CD4-positive, alpha-beta T cell (primary cell): ENCODE measurements at regions of chr11 and their contacts with region 1.

Region 1: GRCh38 chr11:134506046-134506445 is 94.0 kb upstream of the B3GAT1 start:
- DNase-seq: no peak
- ATAC-seq: no peak
- H3K4me3 ChIP-seq: no peak overlapping the region
- H3K4me3 Mint-ChIP-seq: no peak overlapping the region
- H3K27ac ChIP-seq: no peak overlapping the region
- H3K27ac Mint-ChIP-seq: no peak overlapping the region
- H3K4me1 ChIP-seq: no peaks in the 10 kb centered on the region
- H3K4me1 Mint-ChIP-seq: no peaks in the 10 kb centered on the region
- H3K27me3 ChIP-seq: no peaks in the 10 kb centered on the region
- H3K27me3 Mint-ChIP-seq: peaks cover 19% of the 10 kb centered on the region
- CTCF ChIP-seq: no peak

Region 2: DNA sequence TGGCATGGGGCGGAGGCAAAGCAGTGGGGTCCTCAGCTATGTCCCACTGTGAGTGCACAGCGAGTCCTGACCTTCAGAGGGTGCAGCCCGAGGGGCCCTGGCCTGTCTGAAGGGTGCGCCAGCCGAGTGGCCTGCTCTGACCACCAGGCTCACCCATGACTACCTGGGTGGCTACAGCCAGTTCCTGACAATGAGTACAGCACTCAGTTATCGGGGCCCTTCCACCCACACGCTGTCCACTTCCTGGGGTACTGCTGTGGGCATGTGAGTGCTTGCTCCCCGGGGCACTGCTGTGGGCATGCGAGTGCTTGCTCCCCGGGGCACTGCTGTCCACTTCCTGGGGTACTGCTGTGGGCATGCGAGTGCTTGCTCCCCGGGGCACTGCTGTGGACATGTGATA is 19.9 kb before region 1 on chr11:
- CTCF ChIA-PET with region 1: no interaction called
- POLR2A ChIA-PET with region 1: no interaction called
- intact Hi-C with region 1: loop called in 1 of 2 experiments (anchors 2 kb)
- DNase-seq: no peak
- ATAC-seq: no peak
- H3K4me3 ChIP-seq: no peak overlapping the region
- H3K4me3 Mint-ChIP-seq: no peak overlapping the region
- H3K27ac ChIP-seq: no peak overlapping the region
- H3K27ac Mint-ChIP-seq: no peak overlapping the region
- H3K4me1 ChIP-seq: no peaks in the 10 kb centered on the region
- H3K4me1 Mint-ChIP-seq: no peaks in the 10 kb centered on the region
- H3K27me3 ChIP-seq: no peaks in the 10 kb centered on the region
- H3K27me3 Mint-ChIP-seq: peaks cover 14% of the 10 kb centered on the region
- CTCF ChIP-seq: no peak